Ascending aorta (tissue), 2 donors: ENCODE measurements at regions of chr19 and their contacts with region 1.

Region 1: DNA sequence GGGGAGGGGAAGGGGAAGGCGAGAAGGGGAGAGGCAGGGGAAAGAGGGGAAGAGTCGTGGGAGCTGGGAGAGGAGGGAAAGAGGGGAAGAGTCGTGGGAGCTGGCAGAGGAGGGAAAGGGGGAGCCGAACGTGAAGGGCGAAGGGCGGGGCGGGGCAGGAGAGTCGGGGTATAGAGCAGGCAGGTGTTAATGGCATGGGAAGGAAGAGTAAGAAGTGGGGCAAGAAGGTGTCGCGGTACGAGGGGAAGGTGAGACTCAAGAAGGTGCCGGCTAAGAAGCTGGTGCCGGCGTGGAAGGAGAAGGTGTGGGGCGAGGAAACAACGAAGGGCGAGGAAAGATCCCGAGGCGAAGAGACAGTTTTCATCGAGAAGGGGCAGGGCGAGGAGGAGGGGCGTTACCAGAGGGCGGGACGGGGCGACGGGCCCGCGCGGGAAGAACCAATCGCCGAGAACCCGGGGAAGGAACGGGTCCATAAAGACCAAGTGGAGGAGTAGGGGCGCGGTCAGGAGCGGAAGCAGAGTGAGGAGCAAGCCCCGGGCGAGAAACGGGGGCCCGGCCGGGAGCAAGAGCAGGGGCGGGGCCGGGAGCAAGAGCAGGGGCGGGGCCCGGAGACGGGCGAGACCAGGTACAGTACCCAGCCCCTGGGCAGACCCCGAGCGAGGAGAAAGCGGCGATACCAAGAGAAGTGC is 463 bp downstream of the CATSPERG start:
- DNase-seq: peak; percentile 90 to 98
- H3K4me3 ChIP-seq: peak overlapping the region; percentile 70 to 72
- H3K27ac ChIP-seq: peak overlapping the region; percentile 96 to 99
- H3K4me1 ChIP-seq: peaks cover 0 to 18% of the 10 kb centered on the region in 2 donors
- H3K27me3 ChIP-seq: no peaks in the 10 kb centered on the region
- CTCF ChIP-seq: no peak

Region 2: GRCh38 chr19:38142176-38143035 is 193.7 kb before region 1 on chr19:
- intact Hi-C with region 1: loop called (anchors 5 kb)
- DNase-seq: peak in 1 of 2 donors; percentile 68
- H3K4me3 ChIP-seq: no peak overlapping the region
- H3K27ac ChIP-seq: no peak overlapping the region
- H3K4me1 ChIP-seq: no peaks in the 10 kb centered on the region
- H3K27me3 ChIP-seq: no peaks in the 10 kb centered on the region
- CTCF ChIP-seq: peak; percentile 58 to 72 (median 59)

Region 3: GRCh38 chr19:38224014-38224862 is 111.9 kb before region 1 on chr19 and contains the start of gene DPF1:
- intact Hi-C with region 1: no loop called
- DNase-seq: no peak
- H3K4me3 ChIP-seq: peak within 1 kb of the TSS; percentile 32 to 54
- H3K27ac ChIP-seq: no peak within 1 kb of the TSS
- H3K4me1 ChIP-seq: peaks cover 14 to 15% of the 10 kb centered on the region in 2 donors
- H3K27me3 ChIP-seq: peaks cover 38% of the 10 kb centered on the region
- CTCF ChIP-seq: no peak
- total RNA-seq, gene DPF1: not detected

Region 4: GRCh38 chr19:38245826-38246498 is 90.1 kb before region 1 on chr19:
- intact Hi-C with region 1: loop called (anchors 2 kb)
- DNase-seq: peak in 1 of 2 donors; percentile 87
- H3K4me3 ChIP-seq: peak overlapping the region in 1 of 2 donors; percentile 6
- H3K27ac ChIP-seq: peak overlapping the region; percentile 90 to 99
- H3K4me1 ChIP-seq: peaks cover 18 to 63% of the 10 kb centered on the region in 2 donors
- H3K27me3 ChIP-seq: no peaks in the 10 kb centered on the region
- CTCF ChIP-seq: no peak

Region 5: GRCh38 chr19:38374429-38375176 is 38.5 kb after region 1 on chr19 and contains the start of gene PSMD8:
- intact Hi-C with region 1: loop called (anchors 1 kb)
- DNase-seq: peak; percentile 98 to 100
- H3K4me3 ChIP-seq: peak within 1 kb of the TSS; percentile 75 to 79
- H3K27ac ChIP-seq: peak within 1 kb of the TSS; percentile 84
- H3K4me1 ChIP-seq: peaks cover 9 to 14% of the 10 kb centered on the region in 2 donors
- H3K27me3 ChIP-seq: no peaks in the 10 kb centered on the region
- CTCF ChIP-seq: peak in 2 of 3 experiments; percentile 8 to 25
- total RNA-seq, gene PSMD8: 235 TPM

Region 6: DNA sequence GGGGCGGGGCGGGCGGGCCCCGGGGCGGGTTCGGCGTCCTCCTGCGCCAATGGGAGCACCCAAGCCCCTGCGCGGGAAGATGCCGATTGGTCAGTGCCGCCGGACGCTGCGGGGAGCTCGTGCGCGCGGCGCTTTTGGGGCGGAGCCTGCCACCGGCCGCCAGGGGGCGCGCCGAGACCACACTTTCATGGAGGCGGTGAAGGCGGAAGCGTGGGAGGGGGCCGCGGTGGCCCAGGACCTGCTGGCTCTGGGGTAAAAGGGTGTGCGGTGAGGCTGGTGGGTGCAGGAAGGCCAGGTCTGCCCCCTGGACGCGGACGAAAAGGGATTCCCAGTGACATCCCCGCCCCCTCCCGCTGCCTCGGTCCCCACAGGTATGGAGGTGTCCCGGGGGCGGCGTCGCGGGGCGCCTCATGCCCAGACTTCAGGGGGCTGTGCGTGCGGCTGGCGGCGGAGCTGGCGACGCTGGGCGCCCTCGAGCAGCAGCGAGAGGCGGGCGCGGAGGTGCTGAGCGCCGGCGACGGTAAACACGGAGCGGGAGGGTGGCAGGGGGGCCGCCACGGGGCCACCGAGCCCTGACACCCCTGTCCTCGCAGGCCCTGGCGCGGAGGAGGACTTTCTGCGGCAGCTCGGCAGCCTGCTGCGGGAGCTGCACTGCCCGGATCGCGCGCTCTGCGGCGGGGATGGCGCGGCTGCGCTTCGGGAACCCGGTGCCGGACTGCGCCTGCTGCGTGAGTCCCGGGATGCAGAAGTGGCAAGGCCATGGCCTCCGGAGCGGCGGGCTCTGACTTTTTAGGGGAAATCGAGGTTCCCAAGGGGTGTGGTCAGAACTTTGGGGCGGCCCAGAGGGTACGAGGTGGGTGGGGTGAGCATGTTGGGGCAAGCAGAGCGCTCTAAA is 67.1 kb after region 1 on chr19 and contains the start of gene FAM98C:
- intact Hi-C with region 1: loop called (anchors 2 kb)
- DNase-seq: peak; percentile 92 to 99
- H3K4me3 ChIP-seq: peak within 1 kb of the TSS; percentile 93
- H3K27ac ChIP-seq: peak within 1 kb of the TSS; percentile 72 to 73
- H3K4me1 ChIP-seq: peaks cover 0 to 11% of the 10 kb centered on the region in 2 donors
- H3K27me3 ChIP-seq: no peaks in the 10 kb centered on the region
- CTCF ChIP-seq: peak; percentile 95 to 97 (median 96)
- total RNA-seq, gene FAM98C: 11.1 TPM